Activated CD8-positive, alpha-beta T cell treated with anti-CD3 and anti-CD28 coated beads, Interleukin-2, amount 10 ng/mL, durations not matched to agents 7 days and 5 days (primary cell): ENCODE measurements at regions of chr1 and their contacts with region 1.

Region 1: GRCh38 chr1:211514030-211514754 is 22.2 kb upstream of the RD3 start:
- DNase-seq: peak; percentile 85
- ATAC-seq: peak; percentile 78
- H3K4me3 Mint-ChIP-seq: peak overlapping the region; percentile 60
- H3K27ac Mint-ChIP-seq: peak overlapping the region; percentile 31
- H3K4me1 Mint-ChIP-seq: peaks cover 47% of the 10 kb centered on the region
- H3K27me3 Mint-ChIP-seq: peaks cover 6% of the 10 kb centered on the region

Region 2: GRCh38 chr1:211267204-211267857 is 246.9 kb before region 1 on chr1:
- CTCF ChIA-PET with region 1: no interaction called
- POLR2A ChIA-PET with region 1: no interaction called
- DNase-seq: no peak
- ATAC-seq: no peak
- H3K4me3 Mint-ChIP-seq: no peak overlapping the region
- H3K27ac Mint-ChIP-seq: no peak overlapping the region
- H3K4me1 Mint-ChIP-seq: peaks cover 3% of the 10 kb centered on the region
- H3K27me3 Mint-ChIP-seq: no peaks in the 10 kb centered on the region

Region 3: GRCh38 chr1:211323156-211324063 is 190.8 kb before region 1 on chr1:
- CTCF ChIA-PET with region 1: interaction called, 51 read pairs
- POLR2A ChIA-PET with region 1: interaction called, 3 read pairs
- DNase-seq: peak; percentile 85
- ATAC-seq: peak; percentile 68
- H3K4me3 Mint-ChIP-seq: no peak overlapping the region
- H3K27ac Mint-ChIP-seq: no peak overlapping the region
- H3K4me1 Mint-ChIP-seq: peaks cover 46% of the 10 kb centered on the region
- H3K27me3 Mint-ChIP-seq: no peaks in the 10 kb centered on the region

Region 4: GRCh38 chr1:211476200-211476849 is 37.9 kb before region 1 on chr1:
- CTCF ChIA-PET with region 1: interaction called, 24 read pairs
- POLR2A ChIA-PET with region 1: no interaction called
- DNase-seq: peak; percentile 88
- ATAC-seq: peak; percentile 87
- H3K4me3 Mint-ChIP-seq: no peak overlapping the region
- H3K27ac Mint-ChIP-seq: no peak overlapping the region
- H3K4me1 Mint-ChIP-seq: no peaks in the 10 kb centered on the region
- H3K27me3 Mint-ChIP-seq: peaks cover 33% of the 10 kb centered on the region

Region 5: GRCh38 chr1:211524521-211524920 is 10.3 kb after region 1 on chr1:
- CTCF ChIA-PET with region 1: interaction called, 17 read pairs
- POLR2A ChIA-PET with region 1: no interaction called
- DNase-seq: no peak
- ATAC-seq: no peak
- H3K4me3 Mint-ChIP-seq: no peak overlapping the region
- H3K27ac Mint-ChIP-seq: no peak overlapping the region
- H3K4me1 Mint-ChIP-seq: peaks cover 14% of the 10 kb centered on the region
- H3K27me3 Mint-ChIP-seq: peaks cover 4% of the 10 kb centered on the region

Region 6: DNA sequence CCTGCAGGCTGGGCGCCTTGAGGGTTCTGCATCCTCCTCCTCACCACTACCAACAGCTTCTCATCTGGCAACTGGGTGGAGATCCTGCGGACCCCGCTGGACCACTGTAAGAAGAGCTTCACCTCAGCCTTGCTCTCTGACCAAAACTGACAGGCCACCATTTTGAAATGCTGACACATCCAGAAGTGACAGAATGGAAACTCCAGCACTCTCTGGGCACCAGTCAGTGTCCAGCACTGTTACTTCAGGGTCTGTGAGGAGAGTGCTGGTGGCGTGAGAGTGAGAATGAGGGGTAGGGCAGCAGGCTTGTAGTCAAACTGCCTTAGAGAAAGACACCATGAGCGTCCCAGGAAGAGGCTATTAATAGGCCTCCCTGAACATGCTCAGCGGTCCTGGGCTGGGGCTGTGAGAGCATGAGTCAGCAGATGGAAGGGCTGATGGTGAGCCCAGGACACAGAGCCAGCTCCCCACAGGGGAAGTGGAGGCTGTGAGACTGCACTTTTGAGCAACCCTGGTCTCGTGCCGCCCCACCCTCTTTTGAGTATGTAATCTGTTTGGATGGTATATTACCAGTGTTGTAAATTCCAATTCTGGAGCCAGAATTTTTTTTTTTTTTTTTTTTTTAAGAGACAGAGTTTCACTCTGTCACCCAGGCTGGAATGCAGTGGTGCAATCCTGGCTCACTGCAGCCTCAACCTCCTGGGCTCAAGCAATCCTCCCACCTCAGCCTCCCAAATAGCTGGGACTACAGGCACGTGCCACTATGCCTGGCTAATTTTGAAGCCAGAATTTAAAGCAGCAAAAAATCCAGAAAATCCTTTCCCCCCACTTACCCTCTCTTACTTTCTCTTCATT is 99.1 kb after region 1 on chr1:
- CTCF ChIA-PET with region 1: no interaction called
- POLR2A ChIA-PET with region 1: no interaction called
- DNase-seq: no peak
- ATAC-seq: no peak
- H3K4me3 Mint-ChIP-seq: no peak overlapping the region
- H3K27ac Mint-ChIP-seq: no peak overlapping the region
- H3K4me1 Mint-ChIP-seq: peaks cover 11% of the 10 kb centered on the region
- H3K27me3 Mint-ChIP-seq: no peaks in the 10 kb centered on the region

Region 7: DNA sequence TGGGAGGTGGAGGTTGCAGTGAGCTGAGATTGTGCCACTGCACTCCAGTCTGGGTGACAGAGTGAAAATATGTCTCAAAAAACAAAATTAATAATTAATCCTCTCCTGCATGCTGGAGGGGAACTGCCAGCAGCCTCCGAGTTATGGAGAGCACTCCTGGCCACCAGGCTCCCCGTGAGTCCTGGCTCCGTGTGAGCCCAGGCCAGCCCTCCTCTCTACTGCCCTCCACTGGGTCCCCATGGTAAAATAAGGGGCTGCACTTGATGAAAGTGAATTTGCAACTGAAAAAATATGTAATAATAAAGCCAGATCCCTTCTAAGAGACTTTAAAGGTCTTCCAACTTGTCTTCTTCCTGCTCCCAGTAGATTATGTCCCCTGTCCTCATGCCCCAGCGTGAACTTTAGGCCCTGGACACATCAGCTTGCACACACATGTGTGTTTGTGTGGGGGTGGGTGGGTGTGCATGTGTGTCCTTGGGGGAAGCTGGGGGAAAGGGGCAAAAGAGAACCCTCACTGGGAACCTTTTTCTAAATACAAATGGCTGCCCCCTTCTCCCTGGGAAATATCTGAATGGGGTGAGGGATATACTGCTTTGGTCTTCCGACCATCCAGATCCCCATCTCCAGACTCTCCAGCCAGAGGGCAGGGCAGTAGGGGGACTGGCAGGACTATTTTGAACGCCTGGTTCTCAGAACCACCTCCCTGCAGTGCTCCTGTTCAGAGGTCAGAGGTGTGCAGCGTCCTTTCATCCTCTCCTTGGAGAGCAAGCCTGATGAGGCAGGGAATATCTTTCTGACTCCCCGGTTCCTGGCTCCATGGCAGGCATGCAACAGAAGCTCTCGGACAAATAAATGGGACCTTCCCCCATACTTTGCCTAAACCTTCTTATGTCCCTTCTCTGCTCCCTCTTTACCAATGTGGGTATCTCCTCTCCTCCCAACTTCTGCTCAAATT is 135.1 kb after region 1 on chr1:
- CTCF ChIA-PET with region 1: interaction called, 37 read pairs
- POLR2A ChIA-PET with region 1: no interaction called
- DNase-seq: peak; percentile 60
- ATAC-seq: peak; percentile 76
- H3K4me3 Mint-ChIP-seq: no peak overlapping the region
- H3K27ac Mint-ChIP-seq: no peak overlapping the region
- H3K4me1 Mint-ChIP-seq: no peaks in the 10 kb centered on the region
- H3K27me3 Mint-ChIP-seq: peaks cover 21% of the 10 kb centered on the region

Region 8: GRCh38 chr1:211680752-211681327 is 166.6 kb after region 1 on chr1:
- CTCF ChIA-PET with region 1: no interaction called
- POLR2A ChIA-PET with region 1: no interaction called
- DNase-seq: peak; percentile 85
- ATAC-seq: peak; percentile 90
- H3K4me3 Mint-ChIP-seq: no peak overlapping the region
- H3K27ac Mint-ChIP-seq: peak overlapping the region; percentile 11
- H3K4me1 Mint-ChIP-seq: peaks cover 13% of the 10 kb centered on the region
- H3K27me3 Mint-ChIP-seq: peaks cover 3% of the 10 kb centered on the region

Region 9: DNA sequence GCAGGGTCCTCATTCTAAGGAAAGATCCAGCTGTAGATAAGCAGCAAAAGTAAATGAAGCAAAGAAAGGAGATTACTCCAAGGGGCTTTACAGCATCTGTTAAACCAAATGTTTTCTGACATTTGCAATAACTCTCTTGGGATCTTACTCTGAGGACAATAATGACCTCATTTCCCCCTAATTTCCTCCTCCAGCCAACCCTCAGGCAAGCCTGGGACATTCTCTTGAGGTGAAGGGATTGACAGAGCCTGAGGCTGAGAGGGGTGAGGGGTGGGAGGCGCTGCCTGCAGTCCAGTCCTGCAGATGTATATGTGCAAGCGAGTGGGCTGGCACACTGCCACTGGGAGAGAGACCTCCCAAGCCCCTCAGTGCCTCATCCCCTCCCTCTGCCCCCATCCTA is 201.8 kb after region 1 on chr1:
- CTCF ChIA-PET with region 1: no interaction called
- POLR2A ChIA-PET with region 1: no interaction called
- DNase-seq: no peak
- ATAC-seq: no peak
- H3K4me3 Mint-ChIP-seq: no peak overlapping the region
- H3K27ac Mint-ChIP-seq: no peak overlapping the region
- H3K4me1 Mint-ChIP-seq: peaks cover 5% of the 10 kb centered on the region
- H3K27me3 Mint-ChIP-seq: peaks cover 6% of the 10 kb centered on the region